PC-9 (cell line): ENCODE measurements at regions of chr20 and their contacts with region 1.

Region 1: GRCh38 chr20:41798930-41799502 is 180.8 kb upstream of the CHD6 start:
- DNase-seq: no peak
- H3K4me3 ChIP-seq: no peak overlapping the region
- H3K27ac ChIP-seq: no peak overlapping the region
- H3K4me1 ChIP-seq: no peaks in the 10 kb centered on the region
- H3K27me3 ChIP-seq: 0 out of 2 replicates have a peak, but pooled peaks cover 10% of the 10 kb centered on the region
- CTCF ChIP-seq: no peak

Region 2: GRCh38 chr20:41631826-41632225 is 167.2 kb before region 1 on chr20:
- CTCF ChIA-PET with region 1: no interaction called
- POLR2A ChIA-PET with region 1: no interaction called
- intact Hi-C with region 1: no loop called
- DNase-seq: no peak
- H3K4me3 ChIP-seq: no peak overlapping the region
- H3K27ac ChIP-seq: no peak overlapping the region
- H3K4me1 ChIP-seq: no peaks in the 10 kb centered on the region
- H3K27me3 ChIP-seq: peaks cover 24% of the 10 kb centered on the region
- CTCF ChIP-seq: no peak

Region 3: DNA sequence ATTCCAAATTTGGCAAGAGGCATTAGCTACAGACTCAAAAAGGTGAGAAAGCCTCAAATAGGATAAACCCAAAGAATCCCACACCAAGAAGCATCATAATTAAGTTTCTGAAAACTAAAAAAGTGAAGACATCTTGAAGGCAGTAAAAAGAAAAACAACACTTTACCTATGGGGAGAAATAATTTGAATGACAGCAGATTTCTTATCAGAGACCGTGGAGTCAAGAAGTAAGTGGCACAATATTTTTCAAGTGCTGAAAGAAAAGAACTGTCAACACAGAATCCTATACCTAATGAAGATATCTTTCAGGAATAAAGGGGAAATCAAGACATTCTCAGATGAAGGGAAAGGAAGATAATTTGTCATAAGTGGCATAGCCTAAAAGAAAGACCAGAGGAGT is 12.4 kb after region 1 on chr20:
- CTCF ChIA-PET with region 1: no interaction called
- POLR2A ChIA-PET with region 1: interaction called, 12 read pairs
- intact Hi-C with region 1: no loop called
- DNase-seq: no peak
- H3K4me3 ChIP-seq: no peak overlapping the region
- H3K27ac ChIP-seq: no peak overlapping the region
- H3K4me1 ChIP-seq: no peaks in the 10 kb centered on the region
- H3K27me3 ChIP-seq: peaks cover 9% of the 10 kb centered on the region; the same call in 1 of the 2 replicates
- CTCF ChIP-seq: no peak

Region 4: DNA sequence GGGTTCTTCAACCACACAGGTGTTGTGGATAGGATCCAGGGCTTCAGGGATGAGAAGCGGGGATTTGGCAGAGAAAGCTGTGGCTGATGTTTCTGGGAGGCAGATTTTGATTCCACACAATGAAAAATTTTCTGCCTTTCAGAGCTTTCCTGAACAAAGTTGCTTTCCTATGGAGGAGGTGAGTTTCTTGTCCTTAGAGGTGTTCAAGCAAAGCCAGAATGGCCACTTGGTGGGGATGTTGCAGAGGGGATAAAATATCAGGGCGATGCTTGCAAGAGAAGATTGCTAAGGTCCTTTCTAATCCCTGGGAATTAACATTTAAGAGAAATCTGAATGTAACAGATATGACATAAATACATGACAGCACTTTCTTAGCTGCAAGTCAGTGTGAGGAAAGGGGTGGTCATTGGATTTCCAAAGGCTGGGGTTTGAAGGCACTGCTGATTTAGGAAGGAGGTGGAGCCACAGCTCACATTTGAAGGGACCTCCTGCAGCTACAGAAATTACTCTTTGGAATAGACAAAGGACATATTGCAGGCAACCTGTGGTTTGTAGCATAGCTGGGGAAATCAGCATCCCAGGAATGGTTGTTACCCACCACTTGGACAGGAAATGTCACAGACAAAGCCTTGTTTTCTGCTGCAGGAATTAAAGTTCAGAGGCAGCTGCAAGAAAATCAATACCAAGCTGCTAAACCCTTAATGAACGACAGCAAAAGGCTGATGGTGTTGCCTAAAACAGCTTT is 90.3 kb after region 1 on chr20:
- CTCF ChIA-PET with region 1: no interaction called
- POLR2A ChIA-PET with region 1: no interaction called
- intact Hi-C with region 1: no loop called
- DNase-seq: no peak
- H3K4me3 ChIP-seq: no peak overlapping the region
- H3K27ac ChIP-seq: no peak overlapping the region
- H3K4me1 ChIP-seq: no peaks in the 10 kb centered on the region
- H3K27me3 ChIP-seq: peaks cover 51% of the 10 kb centered on the region
- CTCF ChIP-seq: 0 out of 2 replicates have a peak, but pooled peaks have one; percentile 21